Prostate gland (tissue), 2 donors: ENCODE measurements at regions of chr2 and their contacts with region 1.

Region 1: DNA sequence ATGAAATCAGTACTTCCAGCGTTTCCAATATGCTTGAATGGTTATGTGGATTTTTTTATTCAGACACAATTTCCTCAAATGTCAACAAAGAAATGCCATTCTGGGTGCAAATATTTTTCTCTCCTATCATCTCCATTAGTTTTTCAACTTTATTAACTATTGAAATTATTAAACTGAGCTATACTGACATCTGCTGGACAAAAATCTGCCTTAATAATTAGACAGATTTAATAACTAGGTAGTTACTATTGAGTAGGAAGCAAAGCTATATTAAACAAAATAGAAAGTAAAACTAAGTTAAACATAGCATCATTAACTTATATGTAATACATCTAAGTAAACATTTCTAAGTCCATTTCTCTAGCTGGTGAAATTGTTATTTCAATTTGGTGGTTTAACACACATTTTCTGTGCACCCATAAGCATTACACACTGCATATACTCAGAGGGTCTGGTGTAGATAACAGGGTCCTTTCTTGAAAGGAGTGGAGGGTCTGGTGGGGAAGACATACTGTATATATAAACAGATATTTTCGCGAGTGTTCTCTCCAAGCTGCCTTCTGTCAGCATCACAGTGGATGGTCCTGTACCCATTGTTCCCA is 77.0 kb downstream of the LANCL1 start:
- DNase-seq: no peak
- H3K4me3 ChIP-seq: no peak overlapping the region
- H3K27ac ChIP-seq: no peak overlapping the region
- H3K4me1 ChIP-seq: no peaks in the 10 kb centered on the region
- H3K27me3 ChIP-seq: no peaks in the 10 kb centered on the region
- CTCF ChIP-seq: peak; percentile 36 to 63 (median 52)
- POLR2A ChIP-seq: no peak

Region 2: DNA sequence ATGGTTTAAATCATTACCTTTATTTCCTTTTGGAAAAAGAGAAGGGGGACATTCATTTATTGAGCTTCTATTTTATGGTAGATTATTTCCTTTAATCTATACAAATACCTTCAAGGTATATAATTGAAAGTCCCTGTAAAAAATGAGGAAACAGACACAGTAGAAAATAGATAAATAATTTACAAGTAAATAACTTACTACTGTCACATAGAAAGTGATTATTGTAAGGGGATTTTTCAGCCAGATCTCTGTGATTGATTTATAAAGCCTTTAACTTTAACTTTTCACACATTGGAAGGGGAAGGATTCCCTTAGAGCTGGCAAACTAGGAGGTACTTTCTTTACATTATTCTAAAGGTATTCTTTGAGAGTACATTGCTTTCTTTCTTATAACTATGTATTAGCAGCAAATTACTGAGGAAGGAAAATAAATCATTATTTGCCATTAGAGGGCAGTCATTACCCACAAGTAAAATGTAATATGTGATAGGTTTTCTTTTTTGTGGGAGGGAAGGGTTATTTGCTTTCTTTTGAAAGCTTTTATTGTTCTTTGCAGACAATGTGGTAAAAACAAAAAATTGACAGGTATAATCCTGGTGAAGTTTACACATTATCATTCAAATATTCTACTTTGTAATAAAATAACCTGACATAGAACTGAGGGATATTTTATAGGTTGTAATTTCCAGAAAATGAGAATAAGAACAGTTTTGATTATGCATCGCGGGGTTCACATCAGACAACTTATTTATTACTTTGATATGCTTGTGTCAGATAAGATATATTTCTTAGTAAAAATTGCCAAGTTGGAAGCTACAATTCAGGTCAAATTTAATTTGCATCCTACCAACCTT is 421.9 kb before region 1 on chr2:
- intact Hi-C with region 1: loop called (anchors 10 kb)
- DNase-seq: no peak
- H3K4me3 ChIP-seq: no peak overlapping the region
- H3K27ac ChIP-seq: no peak overlapping the region
- H3K4me1 ChIP-seq: no peaks in the 10 kb centered on the region
- H3K27me3 ChIP-seq: no peaks in the 10 kb centered on the region
- CTCF ChIP-seq: peak in 3 of 4 experiments; percentile 51 to 69 (median 68)
- POLR2A ChIP-seq: no peak

Region 3: DNA sequence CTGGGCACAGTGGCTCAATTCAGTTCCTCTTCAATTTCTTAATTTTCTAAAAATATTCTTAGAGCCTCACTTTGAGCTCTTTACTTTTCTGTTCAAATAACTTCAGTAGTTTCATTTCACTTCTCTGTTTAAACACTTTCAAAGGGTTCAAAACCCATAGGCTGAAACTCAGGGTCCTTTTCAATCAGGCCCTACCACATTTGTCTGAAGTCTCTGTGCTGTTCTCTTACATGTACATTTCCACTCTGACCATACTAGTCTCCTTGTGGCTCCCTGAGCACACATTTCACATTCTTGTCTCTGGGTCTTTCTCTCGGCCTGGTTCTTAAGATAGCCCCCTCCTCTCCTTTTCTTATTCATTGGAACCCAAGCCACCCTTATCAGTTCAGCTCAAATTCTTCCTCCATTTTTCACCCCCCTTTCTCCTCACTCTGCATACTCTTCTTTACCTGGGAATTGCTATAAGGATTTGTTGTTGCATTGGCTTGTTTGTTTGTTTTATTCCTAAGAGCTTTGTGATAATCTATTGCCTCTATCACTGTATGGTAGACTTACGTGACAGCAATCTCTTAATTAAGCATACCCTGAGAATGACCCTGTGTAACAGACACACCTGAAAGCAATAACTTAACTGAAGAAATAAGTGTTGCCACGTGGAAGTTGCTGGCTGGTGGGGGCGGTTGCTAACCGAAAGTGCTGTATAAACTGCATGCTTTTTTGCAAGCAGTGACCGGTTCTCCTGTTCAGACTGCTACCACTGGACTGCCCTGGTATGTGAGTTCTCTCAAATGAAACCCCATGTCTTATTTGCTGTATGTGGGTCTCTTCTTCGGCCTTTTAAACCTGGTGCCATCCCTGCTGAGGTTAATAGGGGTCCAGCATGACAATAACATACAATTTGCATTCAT is 146.6 kb before region 1 on chr2:
- intact Hi-C with region 1: loop called (anchors 2 kb)
- DNase-seq: no peak
- H3K4me3 ChIP-seq: no peak overlapping the region
- H3K27ac ChIP-seq: no peak overlapping the region
- H3K4me1 ChIP-seq: no peaks in the 10 kb centered on the region
- H3K27me3 ChIP-seq: no peaks in the 10 kb centered on the region
- CTCF ChIP-seq: no peak
- POLR2A ChIP-seq: no peak

Region 4: GRCh38 chr2:210713122-210713521 is 313.6 kb after region 1 on chr2:
- intact Hi-C with region 1: no loop called
- DNase-seq: no peak
- H3K4me3 ChIP-seq: no peak overlapping the region
- H3K27ac ChIP-seq: no peak overlapping the region
- H3K4me1 ChIP-seq: no peaks in the 10 kb centered on the region
- H3K27me3 ChIP-seq: no peaks in the 10 kb centered on the region
- CTCF ChIP-seq: no peak
- POLR2A ChIP-seq: no peak

Region 5: GRCh38 chr2:210818473-210818872 is 418.9 kb after region 1 on chr2:
- intact Hi-C with region 1: no loop called
- DNase-seq: no peak
- H3K4me3 ChIP-seq: no peak overlapping the region
- H3K27ac ChIP-seq: no peak overlapping the region
- H3K4me1 ChIP-seq: no peaks in the 10 kb centered on the region
- H3K27me3 ChIP-seq: no peaks in the 10 kb centered on the region
- CTCF ChIP-seq: no peak
- POLR2A ChIP-seq: no peak